Thyroid gland (tissue), 4 donors: ENCODE measurements at regions of chr17 and their contacts with region 1.

Region 1: DNA sequence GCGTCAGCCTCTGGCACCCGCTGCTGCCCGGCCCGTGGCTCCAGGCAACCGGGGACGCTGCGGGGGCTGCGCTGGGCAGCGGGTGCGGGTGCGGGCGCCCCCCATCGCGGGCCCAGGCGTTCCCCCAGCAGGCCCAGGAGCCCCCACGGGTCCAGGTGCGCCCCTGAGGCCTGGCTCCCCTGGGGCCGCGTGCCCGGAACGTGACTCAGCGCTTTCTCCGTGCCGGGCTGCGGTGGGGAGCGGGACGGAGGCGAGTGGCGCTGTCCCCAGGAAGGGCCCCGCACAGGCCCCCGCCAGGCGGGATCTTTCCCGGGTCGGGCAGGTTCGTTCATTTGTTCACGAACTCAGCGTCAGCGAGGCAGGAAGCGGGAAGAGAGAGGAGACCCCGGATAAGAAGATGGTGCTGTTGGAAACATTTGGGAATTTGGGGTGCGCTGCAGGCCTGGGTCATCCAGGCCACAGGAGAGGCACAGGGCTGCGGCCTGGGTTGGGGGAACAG is 18.4 kb upstream of the EXOC7 start:
- DNase-seq: peak in 1 of 2 donors; percentile 17
- H3K4me3 ChIP-seq: peak overlapping the region in 1 of 3 donors; percentile 20
- H3K27ac ChIP-seq: peak overlapping the region in 1 of 3 donors; percentile 25
- H3K4me1 ChIP-seq: peaks cover 0 to 7% of the 10 kb centered on the region in 2 donors
- H3K27me3 ChIP-seq: no peaks in the 10 kb centered on the region
- CTCF ChIP-seq: no peak
- POLR2A ChIP-seq: no peak

Region 2: GRCh38 chr17:76182016-76182764 is 60.2 kb after region 1 on chr17:
- intact Hi-C with region 1: loop called (anchors 5 kb)
- DNase-seq: peak; percentile 89 to 91
- H3K4me3 ChIP-seq: no peak overlapping the region
- H3K27ac ChIP-seq: no peak overlapping the region
- H3K4me1 ChIP-seq: no peaks in the 10 kb centered on the region
- H3K27me3 ChIP-seq: no peaks in the 10 kb centered on the region
- CTCF ChIP-seq: peak; percentile 51 to 90 (median 80)
- POLR2A ChIP-seq: no peak

Region 3: DNA sequence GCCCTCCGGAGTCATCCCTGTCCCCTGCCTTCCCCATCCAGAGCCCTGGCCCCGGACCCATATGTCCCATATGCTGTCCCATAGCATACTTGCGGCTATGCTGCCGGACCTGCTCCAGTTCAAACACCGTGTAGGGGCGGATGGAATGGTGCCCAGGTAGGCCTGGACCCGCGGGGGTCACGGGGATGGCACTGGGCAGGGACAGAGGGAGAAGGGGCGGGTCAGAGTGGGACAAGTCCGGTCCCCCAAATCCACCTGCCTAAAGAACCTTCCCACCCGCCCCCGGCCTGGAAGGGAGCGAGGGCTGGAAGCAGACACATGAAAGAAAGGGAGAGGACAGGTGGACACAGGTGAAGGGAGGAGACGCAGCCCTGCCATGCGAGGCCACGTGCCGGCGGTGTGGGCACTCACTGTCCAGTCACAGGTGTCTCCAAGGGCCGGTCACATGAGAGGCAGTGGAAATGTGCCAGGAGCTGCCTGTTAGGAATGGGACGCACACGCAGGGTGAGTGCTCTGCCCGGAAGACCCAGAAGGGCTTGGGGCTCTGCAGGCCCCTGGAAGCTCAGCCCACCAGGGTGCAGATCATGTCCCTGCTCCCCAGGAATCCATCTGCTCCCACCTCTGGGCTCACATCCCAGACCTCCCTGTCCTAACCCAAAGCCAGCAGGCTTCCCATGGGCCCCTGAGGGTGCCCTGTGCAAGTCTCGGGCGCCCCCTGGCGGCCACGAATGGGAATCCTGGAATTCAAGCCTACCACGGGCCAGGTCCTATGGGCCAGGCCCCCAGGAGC is 157.2 kb after region 1 on chr17:
- intact Hi-C with region 1: loop called (anchors 2 kb)
- DNase-seq: peak; percentile 98
- H3K4me3 ChIP-seq: no peak overlapping the region
- H3K27ac ChIP-seq: peak overlapping the region; percentile 39 to 64 (median 61)
- H3K4me1 ChIP-seq: peaks cover 7 to 27% of the 10 kb centered on the region in 2 donors
- H3K27me3 ChIP-seq: no peaks in the 10 kb centered on the region
- CTCF ChIP-seq: peak; percentile 97 to 99 (median 98)
- POLR2A ChIP-seq: peak in 1 of 2 donors; percentile 18

Region 4: GRCh38 chr17:76408052-76408849 is 286.3 kb after region 1 on chr17:
- intact Hi-C with region 1: loop called (anchors 10 kb)
- DNase-seq: peak; percentile 84 to 88
- H3K4me3 ChIP-seq: no peak overlapping the region
- H3K27ac ChIP-seq: no peak overlapping the region
- H3K4me1 ChIP-seq: peaks cover 34 to 43% of the 10 kb centered on the region in 2 donors
- H3K27me3 ChIP-seq: no peaks in the 10 kb centered on the region
- CTCF ChIP-seq: peak; percentile 59 to 87 (median 80)
- POLR2A ChIP-seq: no peak